A549 (cell line): ENCODE measurements at regions of chr16 and their contacts with region 1.

Region 1: DNA sequence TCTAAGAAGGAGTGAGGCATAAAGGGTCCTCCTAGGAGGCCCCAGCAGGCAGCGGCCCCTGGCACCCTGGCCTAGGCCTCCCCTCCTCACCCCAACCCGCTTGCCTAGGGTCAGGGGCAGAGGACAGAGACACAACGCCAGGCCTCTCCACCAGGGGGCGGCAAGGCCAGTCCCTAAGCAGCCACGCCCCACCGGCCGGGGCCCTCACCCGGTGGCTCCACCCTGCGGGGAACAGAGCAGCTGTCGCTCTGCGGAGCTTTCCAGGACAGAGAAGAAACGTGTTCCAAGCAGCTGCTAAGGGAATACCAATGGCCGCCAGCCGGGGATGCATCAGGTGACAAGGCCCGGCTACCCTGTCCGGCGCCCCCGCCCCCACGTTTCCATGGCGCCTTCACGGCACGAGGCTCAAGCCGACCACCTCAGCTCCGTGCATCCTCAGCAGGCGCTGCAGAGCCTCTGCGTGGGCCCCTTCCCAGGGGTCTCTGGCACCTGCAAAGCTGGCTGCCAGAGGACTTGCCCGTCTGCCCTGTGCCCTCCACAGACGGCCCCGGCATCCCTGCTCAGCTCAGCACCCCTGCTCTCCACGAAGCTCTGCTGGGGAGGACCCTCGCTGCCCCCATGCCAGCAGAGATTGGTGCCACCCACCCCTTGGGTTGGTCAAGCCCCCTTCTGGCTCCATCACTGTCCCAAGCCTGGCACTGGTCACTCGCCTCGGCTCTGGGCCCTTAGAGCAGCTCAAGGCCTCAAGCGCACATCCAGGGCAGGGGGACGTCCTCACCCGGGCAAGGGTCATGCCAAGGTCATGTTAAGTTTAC is 5.6 kb downstream of the ZNF598 start:
- DNase-seq: peak; percentile 87 to 95
- ATAC-seq: peak; percentile 77 to 90
- H3K4me3 ChIP-seq: no peak overlapping the region
- H3K27ac ChIP-seq: peak overlapping the region; percentile 56 to 71
- H3K4me1 ChIP-seq: peaks cover 49% of the 10 kb centered on the region
- CTCF ChIP-seq: peak; percentile 87
- EP300 ChIP-seq: no peak
- POLR2A ChIP-seq: no peak
- RAD21 ChIP-seq: peak; percentile 52 to 64

Region 2: DNA sequence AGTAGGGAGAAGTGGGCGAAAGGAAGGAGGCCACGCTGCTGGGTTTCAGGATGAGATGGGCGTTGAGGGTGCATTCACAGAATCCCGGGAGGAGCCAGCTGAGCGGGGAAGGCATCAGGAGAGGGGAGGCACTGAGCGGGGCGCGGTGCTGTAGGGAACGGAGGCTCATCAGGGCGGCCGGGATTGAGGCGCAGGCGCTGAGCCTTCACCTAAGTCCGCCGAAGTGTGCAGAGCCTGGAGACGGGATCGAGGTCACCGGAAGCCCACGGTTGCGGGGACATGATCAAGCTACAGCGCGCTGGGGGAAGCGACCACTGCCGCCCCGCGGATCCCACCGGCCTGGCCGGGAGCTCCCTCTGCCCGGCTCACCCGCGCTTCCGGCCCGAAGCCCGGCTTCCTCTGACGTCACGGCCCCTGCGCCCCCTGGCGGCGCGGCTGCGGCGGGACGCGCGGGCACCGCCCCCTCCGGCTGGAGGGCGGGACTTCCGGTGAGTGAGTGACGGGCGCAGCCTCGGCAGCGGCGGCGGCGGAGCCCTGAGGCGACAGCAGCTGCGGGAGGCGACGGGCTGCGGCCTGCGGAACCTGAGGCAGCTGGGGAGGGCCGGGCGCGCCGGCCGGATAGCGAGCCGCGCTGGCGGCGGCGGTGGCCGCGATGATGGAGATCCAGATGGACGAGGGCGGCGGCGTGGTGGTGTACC is 298.2 kb before region 1 on chr16 and contains the start of gene MAPK8IP3:
- CTCF ChIA-PET with region 1: no interaction called
- POLR2A ChIA-PET with region 1: no interaction called
- DNase-seq: peak; percentile 91
- ATAC-seq: peak; percentile 88
- H3K4me3 ChIP-seq: peak within 1 kb of the TSS; percentile 89
- H3K27ac ChIP-seq: peak within 1 kb of the TSS; percentile 93 to 96
- H3K4me1 ChIP-seq: peaks cover 14% of the 10 kb centered on the region; the same call in 1 of the 3 replicates
- CTCF ChIP-seq: peak; percentile 93
- EP300 ChIP-seq: no peak
- POLR2A ChIP-seq: peak; percentile 94
- RAD21 ChIP-seq: peak; percentile 21 to 64; a peak in 3 of 5 replicates
- polyA plus RNA-seq, gene MAPK8IP3: 12.0 and 13.4 TPM in 2 replicates

Region 3: GRCh38 chr16:1950047-1950446 is 54.0 kb before region 1 on chr16:
- CTCF ChIA-PET with region 1: no interaction called
- POLR2A ChIA-PET with region 1: no interaction called
- DNase-seq: no peak
- ATAC-seq: peak; percentile 34 to 46
- H3K4me3 ChIP-seq: no peak overlapping the region
- H3K27ac ChIP-seq: no peak overlapping the region
- H3K4me1 ChIP-seq: no peaks in the 10 kb centered on the region
- CTCF ChIP-seq: no peak
- EP300 ChIP-seq: no peak
- POLR2A ChIP-seq: no peak
- RAD21 ChIP-seq: no peak

Region 4: DNA sequence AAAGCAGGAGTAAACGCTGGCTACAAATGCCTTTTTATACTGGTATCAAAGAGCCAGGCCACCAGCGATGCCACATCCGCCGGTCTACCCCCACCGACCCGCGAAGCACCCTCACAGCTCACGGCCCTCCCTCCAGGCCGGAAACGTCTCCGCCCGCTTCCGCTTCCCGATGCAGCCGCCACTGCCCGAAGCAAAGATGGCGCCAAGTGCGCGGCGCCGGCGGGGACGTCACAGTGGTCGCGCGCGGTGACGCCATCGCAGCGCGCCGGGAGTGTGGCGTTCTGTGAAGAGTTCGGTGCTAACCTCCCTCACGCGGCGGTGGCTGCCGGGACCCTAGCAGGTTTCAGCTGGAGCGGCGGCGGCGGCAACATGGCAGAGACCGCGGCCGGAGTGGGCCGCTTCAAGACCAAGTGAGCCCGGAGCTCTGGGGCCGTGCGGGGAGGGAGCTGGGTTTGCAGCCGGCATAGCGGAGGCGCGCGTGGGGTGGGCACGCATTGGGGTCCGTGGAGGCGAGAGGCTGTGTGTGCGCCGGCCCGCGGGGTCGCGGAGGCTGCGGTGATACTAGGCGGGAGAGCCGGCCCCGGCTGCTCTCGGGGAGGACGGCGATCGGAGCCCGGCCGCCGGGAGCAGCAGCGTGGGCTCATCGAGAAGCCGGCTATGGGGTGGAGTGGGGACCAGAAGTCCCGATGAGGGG is 32.1 kb before region 1 on chr16 and contains the start of gene TBL3:
- CTCF ChIA-PET with region 1: interaction called, 13 read pairs
- POLR2A ChIA-PET with region 1: interaction called, 4 read pairs
- DNase-seq: peak; percentile 91 to 95
- ATAC-seq: peak; percentile 85 to 92
- H3K4me3 ChIP-seq: peak within 1 kb of the TSS; percentile 65
- H3K27ac ChIP-seq: peak within 1 kb of the TSS; percentile 98 to 99
- H3K4me1 ChIP-seq: peaks cover 17% of the 10 kb centered on the region
- CTCF ChIP-seq: no peak
- EP300 ChIP-seq: no peak
- POLR2A ChIP-seq: peak; percentile 88
- RAD21 ChIP-seq: no peak
- polyA plus RNA-seq, gene TBL3: 21.9 and 25.9 TPM in 2 replicates

Region 5: GRCh38 chr16:2023098-2023925 is 19.3 kb after region 1 on chr16:
- CTCF ChIA-PET with region 1: interaction called, 37 read pairs
- POLR2A ChIA-PET with region 1: no interaction called
- DNase-seq: peak; percentile 88 to 92
- ATAC-seq: peak; percentile 54 to 80
- H3K4me3 ChIP-seq: peak overlapping the region; percentile 34
- H3K27ac ChIP-seq: peak overlapping the region; percentile 89 to 97
- H3K4me1 ChIP-seq: peaks cover 31% of the 10 kb centered on the region
- CTCF ChIP-seq: peak; percentile 93
- EP300 ChIP-seq: no peak
- POLR2A ChIP-seq: peak; percentile 61
- RAD21 ChIP-seq: peak; percentile 94 to 97

Region 6: GRCh38 chr16:2047330-2048115 is 43.5 kb after region 1 on chr16 and contains the starts of genes NTHL1 and TSC2:
- CTCF ChIA-PET with region 1: interaction called, 17 read pairs
- POLR2A ChIA-PET with region 1: no interaction called
- DNase-seq: peak; percentile 86 to 98
- ATAC-seq: peak; percentile 92 to 94
- H3K4me3 ChIP-seq: peak within 1 kb of the TSS; percentile 68
- H3K27ac ChIP-seq: peak within 1 kb of the TSS; percentile 79 to 91
- H3K4me1 ChIP-seq: peaks cover 35% of the 10 kb centered on the region
- CTCF ChIP-seq: peak; percentile 29; the same call in 1 of the 3 replicates
- EP300 ChIP-seq: no peak
- POLR2A ChIP-seq: peak; percentile 72
- RAD21 ChIP-seq: peak; percentile 10 to 15; a peak in 1 of 5 replicates
- polyA plus RNA-seq, gene NTHL1: 28.8 and 34.8 TPM in 2 replicates
- polyA plus RNA-seq, gene TSC2: 32.6 and 41.7 TPM in 2 replicates

Region 7: GRCh38 chr16:2076072-2076865 is 72.2 kb after region 1 on chr16:
- CTCF ChIA-PET with region 1: interaction called, 10 read pairs
- POLR2A ChIA-PET with region 1: no interaction called
- DNase-seq: no peak
- ATAC-seq: no peak
- H3K4me3 ChIP-seq: no peak overlapping the region
- H3K27ac ChIP-seq: no peak overlapping the region
- H3K4me1 ChIP-seq: no peaks in the 10 kb centered on the region
- CTCF ChIP-seq: no peak
- EP300 ChIP-seq: no peak
- POLR2A ChIP-seq: no peak
- RAD21 ChIP-seq: no peak

Region 8: GRCh38 chr16:2147981-2148671 is 144.1 kb after region 1 on chr16 and contains the start of gene RAB26:
- CTCF ChIA-PET with region 1: interaction called, 52 read pairs
- POLR2A ChIA-PET with region 1: no interaction called
- DNase-seq: peak; percentile 84 to 85
- ATAC-seq: peak; percentile 42 to 56
- H3K4me3 ChIP-seq: peak within 1 kb of the TSS; percentile 45
- H3K27ac ChIP-seq: peak within 1 kb of the TSS; percentile 92 to 94
- H3K4me1 ChIP-seq: peaks cover 53% of the 10 kb centered on the region
- CTCF ChIP-seq: no peak
- EP300 ChIP-seq: no peak
- POLR2A ChIP-seq: peak; percentile 33; the same call in 1 of the 2 replicates
- RAD21 ChIP-seq: 0 out of 5 replicates have a peak, but pooled peaks of 1 of the 2 experiments have one; percentile 17
- polyA plus RNA-seq, gene RAB26: 6.7 and 7.5 TPM in 2 replicates